ENCODE measurements at regions of chr1 and their contacts with region 1.

Region 1: DNA sequence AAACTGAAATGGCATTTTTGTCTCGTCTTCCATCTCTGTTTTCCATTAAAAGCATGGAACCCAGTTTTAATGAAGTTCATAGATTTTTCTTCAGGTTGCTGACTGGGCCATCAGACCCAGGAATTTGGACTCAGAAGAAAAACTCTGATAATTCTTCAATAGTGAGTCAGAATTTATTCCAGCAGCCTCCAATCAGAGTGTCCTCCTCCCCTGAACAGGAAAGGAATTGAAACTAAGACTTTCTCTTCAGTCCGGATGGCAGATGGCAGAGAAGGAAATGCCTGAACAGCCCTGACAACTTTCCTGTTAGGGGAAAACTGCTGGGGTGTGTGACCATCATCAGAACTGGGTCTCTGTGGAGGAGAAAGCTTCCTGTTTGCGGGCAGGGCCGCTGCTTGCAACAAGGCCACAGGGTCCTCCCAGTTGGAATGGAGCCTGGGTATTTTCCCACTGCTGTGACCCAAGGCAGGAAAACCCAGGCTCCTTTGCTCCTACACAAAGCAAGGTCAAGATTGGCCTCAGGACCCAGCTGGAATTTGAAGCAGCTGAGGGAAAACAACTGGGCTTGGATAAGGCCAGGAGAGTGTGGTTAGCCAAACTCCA is 20.7 kb downstream of the CD34 start:
- DNase-seq: peak; percentile 80
- H3K4me3 ChIP-seq: no peak overlapping the region
- H3K27ac ChIP-seq: peak overlapping the region; percentile 95
- H3K4me1 ChIP-seq: peaks cover 100% of the 10 kb centered on the region
- H3K27me3 ChIP-seq: no peaks in the 10 kb centered on the region
- CTCF ChIP-seq: no peak

Region 2: DNA sequence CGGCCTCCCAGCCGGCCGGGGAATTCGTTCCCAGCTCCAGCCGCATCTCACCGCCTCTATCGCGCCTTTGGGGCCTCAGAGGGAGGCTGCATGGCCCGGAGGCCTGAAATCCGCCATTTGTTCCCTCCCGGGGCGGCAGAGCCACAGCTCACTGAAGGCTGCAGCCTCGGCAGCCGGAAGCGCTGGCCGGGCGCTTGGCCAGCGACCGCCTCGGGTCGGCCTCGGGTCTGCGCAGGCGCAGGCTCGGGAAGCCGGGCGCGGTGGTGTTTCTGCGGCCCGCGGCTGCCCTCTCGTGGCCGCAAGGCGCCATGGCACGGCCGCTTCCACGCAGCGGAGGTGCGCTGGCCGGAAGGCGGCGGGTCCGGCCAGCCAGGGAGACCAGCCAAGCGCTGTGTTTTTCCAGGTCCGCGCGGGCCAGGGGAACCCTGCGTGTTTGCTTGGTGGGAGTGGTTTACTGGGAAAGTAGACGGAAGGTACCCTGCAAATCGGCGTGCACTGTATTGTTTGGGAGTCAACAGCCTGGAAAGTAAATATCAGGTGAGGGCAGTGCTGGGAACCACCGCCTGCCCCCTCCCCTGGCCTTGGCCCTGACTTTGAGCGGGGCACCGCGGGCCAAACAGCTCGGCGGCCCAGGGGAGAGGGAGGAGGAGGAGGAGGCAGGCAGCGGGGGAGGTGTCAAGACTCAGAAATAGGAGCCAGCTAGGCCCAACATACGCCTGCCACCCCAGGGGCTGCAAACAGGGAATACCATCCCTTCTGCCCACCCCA is 73.4 kb after region 1 on chr1:
- intact Hi-C with region 1: loop called (anchors 5 kb)
- DNase-seq: peak; percentile 90
- H3K4me3 ChIP-seq: peak overlapping the region; percentile 71
- H3K27ac ChIP-seq: peak overlapping the region; percentile 100
- H3K4me1 ChIP-seq: peaks cover 61% of the 10 kb centered on the region
- H3K27me3 ChIP-seq: no peaks in the 10 kb centered on the region
- CTCF ChIP-seq: peak; percentile 100

Measured in left ventricle myocardium inferior (tissue), 1 donor.